CD4-positive, alpha-beta T cell (primary cell): ENCODE measurements at regions of chr10 and their contacts with region 1.

Region 1: GRCh38 chr10:16777473-16778370 is 39.5 kb downstream of the RSU1 start:
- DNase-seq: peak in 5 of 14 experiments; percentile 6 to 83 (median 65)
- ATAC-seq: peak; percentile 75
- H3K4me3 ChIP-seq: no peak overlapping the region
- H3K4me3 Mint-ChIP-seq: peak overlapping the region; percentile 32
- H3K27ac ChIP-seq: no peak overlapping the region
- H3K27ac Mint-ChIP-seq: peak overlapping the region; percentile 81
- H3K4me1 ChIP-seq: peaks cover 20% of the 10 kb centered on the region
- H3K4me1 Mint-ChIP-seq: peaks cover 39% of the 10 kb centered on the region
- H3K27me3 ChIP-seq: no peaks in the 10 kb centered on the region
- H3K27me3 Mint-ChIP-seq: no peaks in the 10 kb centered on the region
- CTCF ChIP-seq: peak; percentile 89

Region 2: GRCh38 chr10:15433850-15434537 is 1343.7 kb before region 1 on chr10:
- CTCF ChIA-PET with region 1: no interaction called
- POLR2A ChIA-PET with region 1: no interaction called
- intact Hi-C with region 1: loop called (anchors 2 kb)
- DNase-seq: peak in 6 of 14 experiments; percentile 7 to 77 (median 46)
- ATAC-seq: peak; percentile 64
- H3K4me3 ChIP-seq: peak overlapping the region; percentile 23
- H3K4me3 Mint-ChIP-seq: peak overlapping the region; percentile 78
- H3K27ac ChIP-seq: no peak overlapping the region
- H3K27ac Mint-ChIP-seq: no peak overlapping the region
- H3K4me1 ChIP-seq: peaks cover 2% of the 10 kb centered on the region
- H3K4me1 Mint-ChIP-seq: peaks cover 10% of the 10 kb centered on the region
- H3K27me3 ChIP-seq: peaks cover 4 to 9% of the 10 kb centered on the region in 2 experiments
- H3K27me3 Mint-ChIP-seq: peaks cover 44% of the 10 kb centered on the region
- CTCF ChIP-seq: peak; percentile 90

Region 3: GRCh38 chr10:15627617-15628196 is 1150.0 kb before region 1 on chr10:
- CTCF ChIA-PET with region 1: no interaction called
- POLR2A ChIA-PET with region 1: no interaction called
- intact Hi-C with region 1: no loop called
- DNase-seq: no peak
- ATAC-seq: no peak
- H3K4me3 ChIP-seq: no peak overlapping the region
- H3K4me3 Mint-ChIP-seq: no peak overlapping the region
- H3K27ac ChIP-seq: no peak overlapping the region
- H3K27ac Mint-ChIP-seq: no peak overlapping the region
- H3K4me1 ChIP-seq: no peaks in the 10 kb centered on the region
- H3K4me1 Mint-ChIP-seq: no peaks in the 10 kb centered on the region
- H3K27me3 ChIP-seq: no peaks in the 10 kb centered on the region
- H3K27me3 Mint-ChIP-seq: peaks cover 6% of the 10 kb centered on the region
- CTCF ChIP-seq: no peak

Region 4: DNA sequence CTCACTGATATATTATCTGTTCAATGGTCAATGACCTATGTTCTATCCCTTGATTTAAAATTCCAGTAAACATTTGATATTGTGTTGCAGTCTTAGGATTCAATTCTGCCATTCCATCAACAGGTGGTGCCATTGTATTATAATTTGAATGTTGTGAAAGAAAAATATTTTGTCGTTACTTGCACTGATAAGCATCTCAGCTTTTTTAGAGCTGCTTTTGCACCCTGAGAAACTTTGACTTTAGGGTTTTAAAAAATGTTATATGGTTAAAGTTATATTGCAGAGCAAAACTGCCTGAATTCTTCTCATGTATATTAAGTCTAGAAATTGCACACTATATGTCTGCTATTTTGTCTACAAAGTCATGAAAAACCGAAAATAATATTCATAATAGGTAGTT is 898.7 kb before region 1 on chr10:
- CTCF ChIA-PET with region 1: no interaction called
- POLR2A ChIA-PET with region 1: no interaction called
- intact Hi-C with region 1: loop called in 1 of 2 experiments (anchors 10 kb)
- DNase-seq: peak in 3 of 14 experiments; percentile 43 to 47 (median 44)
- ATAC-seq: peak; percentile 61
- H3K4me3 ChIP-seq: no peak overlapping the region
- H3K4me3 Mint-ChIP-seq: no peak overlapping the region
- H3K27ac ChIP-seq: no peak overlapping the region
- H3K27ac Mint-ChIP-seq: no peak overlapping the region
- H3K4me1 ChIP-seq: no peaks in the 10 kb centered on the region
- H3K4me1 Mint-ChIP-seq: no peaks in the 10 kb centered on the region
- H3K27me3 ChIP-seq: peaks cover 0 to 12% of the 10 kb centered on the region in 2 experiments
- H3K27me3 Mint-ChIP-seq: peaks cover 79% of the 10 kb centered on the region
- CTCF ChIP-seq: peak; percentile 60

Region 5: DNA sequence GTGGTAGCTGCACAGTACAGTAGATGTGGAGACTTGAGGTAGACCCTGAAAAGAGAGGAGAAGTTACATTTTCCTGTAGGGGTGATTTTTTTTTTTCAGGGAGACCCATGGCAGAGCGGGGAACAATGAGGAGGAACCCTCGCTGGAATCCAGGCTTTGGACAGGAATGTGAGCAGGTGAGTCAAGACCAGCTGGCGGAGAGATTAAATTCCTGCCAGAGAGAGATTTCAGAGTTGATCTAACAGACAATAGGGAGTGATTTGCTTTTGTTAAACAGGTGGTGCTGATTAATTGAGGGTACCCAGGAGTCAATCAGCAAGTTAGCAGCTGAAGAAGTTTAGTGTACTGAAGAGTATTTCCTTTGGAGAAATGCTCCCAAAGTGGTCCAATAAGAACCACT is 875.8 kb before region 1 on chr10:
- CTCF ChIA-PET with region 1: no interaction called
- POLR2A ChIA-PET with region 1: no interaction called
- intact Hi-C with region 1: loop called (anchors 2 to 5 kb)
- DNase-seq: no peak
- ATAC-seq: no peak
- H3K4me3 ChIP-seq: no peak overlapping the region
- H3K4me3 Mint-ChIP-seq: no peak overlapping the region
- H3K27ac ChIP-seq: no peak overlapping the region
- H3K27ac Mint-ChIP-seq: no peak overlapping the region
- H3K4me1 ChIP-seq: no peaks in the 10 kb centered on the region
- H3K4me1 Mint-ChIP-seq: no peaks in the 10 kb centered on the region
- H3K27me3 ChIP-seq: peaks cover under 1 to 14% of the 10 kb centered on the region in 2 experiments
- H3K27me3 Mint-ChIP-seq: peaks cover 33% of the 10 kb centered on the region
- CTCF ChIP-seq: no peak

Region 6: DNA sequence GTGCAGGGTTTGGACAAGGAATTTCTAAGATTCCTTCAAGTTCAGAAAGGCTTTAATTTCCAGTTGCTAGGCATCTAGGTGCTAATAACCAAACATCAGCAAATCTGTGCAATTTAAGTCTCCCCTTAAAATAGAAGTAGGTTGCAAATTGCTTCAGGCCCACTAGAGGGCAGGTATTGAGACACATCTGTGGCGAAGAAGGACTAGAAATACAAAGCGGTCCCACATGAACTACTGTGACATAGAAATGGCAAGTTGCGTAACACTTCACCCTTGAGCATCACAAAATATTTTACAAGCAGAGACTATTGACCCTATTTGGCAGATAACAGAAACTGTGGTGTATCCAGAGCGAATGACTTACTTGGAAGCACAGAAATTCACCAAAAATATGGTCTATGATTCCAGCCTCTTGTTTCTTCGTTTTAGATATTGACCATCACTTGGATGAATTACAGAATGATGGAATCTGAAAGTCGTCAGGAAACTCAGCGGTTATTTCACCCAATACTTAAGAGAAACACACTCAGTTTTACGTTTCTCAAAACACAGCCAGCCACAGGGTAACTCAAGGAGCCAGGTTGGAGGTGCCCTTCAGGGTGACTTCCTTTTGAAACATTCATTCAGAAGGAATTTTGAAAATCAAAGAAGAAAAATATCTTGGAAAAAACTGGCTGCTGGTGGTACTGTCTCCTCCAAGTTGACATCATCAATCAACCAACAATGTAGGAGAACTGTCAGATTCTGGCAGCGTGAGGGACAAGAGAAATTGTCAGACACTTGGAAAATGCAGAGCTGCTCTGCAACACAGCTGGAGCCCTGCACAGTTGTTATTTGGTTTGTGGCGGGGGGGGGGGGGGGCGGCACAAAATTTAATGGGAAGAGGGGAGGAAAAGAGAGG is 661.1 kb before region 1 on chr10:
- CTCF ChIA-PET with region 1: no interaction called
- POLR2A ChIA-PET with region 1: no interaction called
- intact Hi-C with region 1: loop called in 1 of 2 experiments (anchors 5 kb)
- DNase-seq: peak in 2 of 14 experiments; percentile 1 to 7
- ATAC-seq: no peak
- H3K4me3 ChIP-seq: no peak overlapping the region
- H3K4me3 Mint-ChIP-seq: no peak overlapping the region
- H3K27ac ChIP-seq: no peak overlapping the region
- H3K27ac Mint-ChIP-seq: no peak overlapping the region
- H3K4me1 ChIP-seq: no peaks in the 10 kb centered on the region
- H3K4me1 Mint-ChIP-seq: no peaks in the 10 kb centered on the region
- H3K27me3 ChIP-seq: no peaks in the 10 kb centered on the region
- H3K27me3 Mint-ChIP-seq: no peaks in the 10 kb centered on the region
- CTCF ChIP-seq: no peak

Region 7: DNA sequence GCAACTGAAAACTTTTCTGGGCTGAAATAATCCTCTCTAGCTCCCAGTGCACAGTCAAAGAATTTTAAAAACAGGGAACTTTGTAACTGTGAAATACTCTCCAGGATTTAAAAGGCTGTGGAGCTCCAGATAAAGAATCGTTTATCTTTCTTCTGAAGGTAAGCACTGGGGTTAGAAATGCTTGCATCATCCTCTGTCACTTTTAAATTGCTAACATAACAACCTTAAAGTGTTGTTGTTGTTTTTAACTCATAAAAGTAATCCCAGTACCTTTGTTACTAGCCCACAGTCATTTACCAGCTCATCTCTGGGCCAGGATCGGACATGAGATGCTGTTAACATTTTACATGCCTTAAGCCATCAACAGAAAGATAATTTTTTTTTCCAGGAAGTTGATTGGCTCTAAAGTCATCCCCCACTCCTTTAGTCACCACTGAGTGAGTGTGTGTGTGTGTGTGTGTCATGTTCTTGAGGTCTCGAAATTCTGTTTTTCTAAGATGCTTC is 1174.2 kb after region 1 on chr10 and contains the start of gene SLC39A12:
- CTCF ChIA-PET with region 1: no interaction called
- POLR2A ChIA-PET with region 1: no interaction called
- intact Hi-C with region 1: no loop called
- DNase-seq: no peak
- ATAC-seq: no peak
- H3K4me3 ChIP-seq: no peak within 1 kb of the TSS
- H3K4me3 Mint-ChIP-seq: no peak within 1 kb of the TSS
- H3K27ac ChIP-seq: no peak within 1 kb of the TSS
- H3K27ac Mint-ChIP-seq: no peak within 1 kb of the TSS
- H3K4me1 ChIP-seq: no peaks in the 10 kb centered on the region
- H3K4me1 Mint-ChIP-seq: no peaks in the 10 kb centered on the region
- H3K27me3 ChIP-seq: no peaks in the 10 kb centered on the region
- H3K27me3 Mint-ChIP-seq: peaks cover 6% of the 10 kb centered on the region
- CTCF ChIP-seq: no peak
- total RNA-seq, gene SLC39A12: not detected